ENCODE measurements at regions of chr14 and their contacts with region 1.

Region 1: DNA sequence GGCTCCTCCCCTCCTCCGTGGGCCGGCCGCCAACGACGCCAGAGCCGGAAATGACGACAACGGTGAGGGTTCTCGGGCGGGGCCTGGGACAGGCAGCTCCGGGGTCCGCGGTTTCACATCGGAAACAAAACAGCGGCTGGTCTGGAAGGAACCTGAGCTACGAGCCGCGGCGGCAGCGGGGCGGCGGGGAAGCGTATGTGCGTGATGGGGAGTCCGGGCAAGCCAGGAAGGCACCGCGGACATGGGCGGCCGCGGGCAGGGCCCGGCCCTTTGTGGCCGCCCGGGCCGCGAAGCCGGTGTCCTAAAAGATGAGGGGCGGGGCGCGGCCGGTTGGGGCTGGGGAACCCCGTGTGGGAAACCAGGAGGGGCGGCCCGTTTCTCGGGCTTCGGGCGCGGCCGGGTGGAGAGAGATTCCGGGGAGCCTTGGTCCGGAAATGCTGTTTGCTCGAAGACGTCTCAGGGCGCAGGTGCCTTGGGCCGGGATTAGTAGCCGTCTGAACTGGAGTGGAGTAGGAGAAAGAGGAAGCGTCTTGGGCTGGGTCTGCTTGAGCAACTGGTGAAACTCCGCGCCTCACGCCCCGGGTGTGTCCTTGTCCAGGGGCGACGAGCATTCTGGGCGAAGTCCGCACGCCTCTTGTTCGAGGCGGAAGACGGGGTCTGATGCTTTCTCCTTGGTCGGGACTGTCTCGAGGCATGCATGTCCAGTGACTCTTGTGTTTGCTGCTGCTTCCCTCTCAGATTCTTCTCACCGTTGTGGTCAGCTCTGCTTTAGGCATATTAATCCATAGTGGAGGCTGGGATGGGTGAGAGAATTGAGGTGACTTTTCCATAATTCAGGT is at the start of gene PSEN1:
- DNase-seq: peak; percentile 84
- ATAC-seq: peak; percentile 91
- H3K4me3 ChIP-seq: peak within 1 kb of the TSS; percentile 87 to 92 (median 87)
- H3K27ac ChIP-seq: peak within 1 kb of the TSS; percentile 73
- H3K4me1 ChIP-seq: peaks cover 16% of the 10 kb centered on the region
- H3K27me3 ChIP-seq: no peaks in the 10 kb centered on the region; a peak in 1 of 5 replicates
- CTCF ChIP-seq: no peak
- EP300 ChIP-seq: no peak
- POLR2A ChIP-seq: peak; percentile 68 to 84; a peak in 3 of 4 replicates
- RAD21 ChIP-seq: no peak
- total RNA-seq, gene PSEN1: 21.8 and 26.6 TPM in 2 replicates

Region 2: GRCh38 chr14:73058224-73058921 is 78.2 kb before region 1 on chr14 and contains the start of gene RBM25:
- CTCF ChIA-PET with region 1: no interaction called
- POLR2A ChIA-PET with region 1: interaction called, 21 read pairs
- in situ Hi-C with region 1: no loop called
- intact Hi-C with region 1: loop called (anchors 5 kb)
- DNase-seq: peak; percentile 98
- ATAC-seq: peak; percentile 96
- H3K4me3 ChIP-seq: peak within 1 kb of the TSS; percentile 82 to 95 (median 93)
- H3K27ac ChIP-seq: peak within 1 kb of the TSS; percentile 99
- H3K4me1 ChIP-seq: peaks cover 31% of the 10 kb centered on the region
- H3K27me3 ChIP-seq: no peaks in the 10 kb centered on the region; a peak in 1 of 5 replicates
- CTCF ChIP-seq: peak; percentile 47
- EP300 ChIP-seq: peak; percentile 33 to 51; a peak in 3 of 4 replicates
- POLR2A ChIP-seq: peak; percentile 94 to 99
- RAD21 ChIP-seq: no peak
- total RNA-seq, gene RBM25: 52.0 and 65.9 TPM in 2 replicates

Region 3: GRCh38 chr14:73149753-73150152 is 13.1 kb after region 1 on chr14:
- CTCF ChIA-PET with region 1: no interaction called
- POLR2A ChIA-PET with region 1: interaction called, 11 read pairs
- in situ Hi-C with region 1: no loop called
- intact Hi-C with region 1: no loop called
- DNase-seq: peak; percentile 74
- ATAC-seq: peak; percentile 73
- H3K4me3 ChIP-seq: no peak overlapping the region
- H3K27ac ChIP-seq: peak overlapping the region; percentile 54
- H3K4me1 ChIP-seq: peaks cover 50% of the 10 kb centered on the region
- H3K27me3 ChIP-seq: no peaks in the 10 kb centered on the region
- CTCF ChIP-seq: no peak
- EP300 ChIP-seq: no peak
- POLR2A ChIP-seq: no peak
- RAD21 ChIP-seq: no peak

Measured in HepG2 (cell line).